ENCODE measurements at regions of chr3 and their contacts with region 1.

Region 1: DNA sequence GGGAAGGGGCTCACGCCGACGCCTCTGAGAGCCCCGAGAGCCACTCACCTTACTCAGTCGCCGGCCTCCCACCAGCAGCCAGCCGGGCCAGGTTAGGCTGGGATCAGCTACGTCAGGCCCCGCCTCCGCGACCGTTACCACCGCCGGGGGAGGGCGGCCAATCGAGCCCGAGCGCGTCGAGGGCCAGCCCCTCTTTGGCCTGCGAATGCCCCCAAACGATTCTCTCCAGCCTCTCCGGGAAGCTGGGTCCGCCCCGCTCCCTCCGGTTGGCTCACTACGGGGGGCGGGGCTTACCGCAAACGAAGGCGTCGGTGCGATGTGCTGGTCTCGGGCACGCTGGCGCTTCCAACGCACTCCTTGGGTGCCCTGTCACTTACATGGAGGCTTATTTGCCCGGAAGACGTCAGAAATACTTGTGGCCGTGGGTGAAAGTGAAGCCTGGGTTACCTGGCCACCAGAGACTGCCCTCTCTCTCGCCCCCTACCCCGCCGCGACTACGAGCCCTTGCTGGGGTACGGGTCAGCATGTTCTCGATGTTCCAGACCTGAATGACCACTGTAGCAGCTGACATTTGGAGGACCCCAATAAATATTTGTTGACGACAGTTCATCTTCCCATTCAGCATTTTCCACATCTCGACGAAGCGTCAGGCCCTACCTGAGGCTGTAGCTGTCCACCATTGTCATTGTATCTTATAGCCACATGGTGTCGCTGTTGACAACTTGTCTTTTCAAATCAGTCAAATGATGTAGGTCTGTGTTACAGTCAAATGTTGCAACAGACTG is at the start of gene CEP70:
- DNase-seq: peak; percentile 86 to 95 (median 92)
- ATAC-seq: peak; percentile 90 to 92
- H3K4me3 Mint-ChIP-seq: peak within 1 kb of the TSS; percentile 91 to 97 (median 94)
- H3K27ac Mint-ChIP-seq: peak within 1 kb of the TSS; percentile 91 to 100 (median 98)
- H3K4me1 Mint-ChIP-seq: peaks cover 0 to 16% (median 8%) of the 10 kb centered on the region in 4 donors
- H3K27me3 Mint-ChIP-seq: no peaks in the 10 kb centered on the region
- polyA plus RNA-seq, gene CEP70: 12.3 to 16.8 (median 12.5) TPM

Region 2: GRCh38 chr3:138060792-138061191 is 533.5 kb before region 1 on chr3:
- POLR2A ChIA-PET with region 1: no interaction called
- DNase-seq: no peak
- ATAC-seq: no peak
- H3K4me3 Mint-ChIP-seq: no peak overlapping the region
- H3K27ac Mint-ChIP-seq: no peak overlapping the region
- H3K4me1 Mint-ChIP-seq: no peaks in the 10 kb centered on the region
- H3K27me3 Mint-ChIP-seq: peaks cover 0 to 4% (median 1%) of the 10 kb centered on the region in 5 donors

Region 3: DNA sequence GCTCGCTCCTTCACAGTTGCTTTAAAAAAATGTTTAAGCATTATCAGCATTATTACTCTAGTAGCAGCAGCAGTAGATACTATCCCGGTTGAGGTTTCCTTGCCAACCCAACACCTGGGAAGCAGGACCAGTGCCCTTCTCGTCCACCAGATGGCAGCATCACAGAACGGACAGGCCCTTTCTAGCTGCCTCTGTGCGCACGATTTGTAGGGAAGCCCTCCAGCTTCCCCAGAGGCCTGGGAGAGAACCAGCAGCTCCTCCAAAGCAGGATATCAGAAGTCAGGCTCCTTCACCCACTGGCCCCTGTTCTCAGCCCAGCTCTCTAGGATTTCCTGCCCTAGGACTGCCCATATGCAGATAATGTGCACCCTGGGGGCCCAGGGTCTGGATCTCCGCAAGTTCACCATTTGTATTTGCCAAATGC is 176.8 kb before region 1 on chr3:
- POLR2A ChIA-PET with region 1: no interaction called
- DNase-seq: peak; percentile 31 to 76 (median 48)
- ATAC-seq: peak; percentile 63 to 75
- H3K4me3 Mint-ChIP-seq: no peak overlapping the region
- H3K27ac Mint-ChIP-seq: no peak overlapping the region
- H3K4me1 Mint-ChIP-seq: peaks cover 0 to 2% (median 0%) of the 10 kb centered on the region in 4 donors
- H3K27me3 Mint-ChIP-seq: peaks cover 2 to 15% (median 8%) of the 10 kb centered on the region in 5 donors

Region 4: GRCh38 chr3:138608322-138609135 is 14.2 kb after region 1 on chr3 and contains the start of gene FAIM:
- POLR2A ChIA-PET with region 1: interaction called, 53 read pairs
- DNase-seq: peak; percentile 58 to 86 (median 70)
- ATAC-seq: peak; percentile 83 to 84
- H3K4me3 Mint-ChIP-seq: peak within 1 kb of the TSS; percentile 79 to 99 (median 92)
- H3K27ac Mint-ChIP-seq: peak within 1 kb of the TSS; percentile 93 to 100 (median 97)
- H3K4me1 Mint-ChIP-seq: peaks cover 10 to 26% (median 22%) of the 10 kb centered on the region in 4 donors
- H3K27me3 Mint-ChIP-seq: peaks cover 0 to 6% (median 0%) of the 10 kb centered on the region in 5 donors
- polyA plus RNA-seq, gene FAIM: 8.7 to 9.7 (median 9.6) TPM

Region 5: DNA sequence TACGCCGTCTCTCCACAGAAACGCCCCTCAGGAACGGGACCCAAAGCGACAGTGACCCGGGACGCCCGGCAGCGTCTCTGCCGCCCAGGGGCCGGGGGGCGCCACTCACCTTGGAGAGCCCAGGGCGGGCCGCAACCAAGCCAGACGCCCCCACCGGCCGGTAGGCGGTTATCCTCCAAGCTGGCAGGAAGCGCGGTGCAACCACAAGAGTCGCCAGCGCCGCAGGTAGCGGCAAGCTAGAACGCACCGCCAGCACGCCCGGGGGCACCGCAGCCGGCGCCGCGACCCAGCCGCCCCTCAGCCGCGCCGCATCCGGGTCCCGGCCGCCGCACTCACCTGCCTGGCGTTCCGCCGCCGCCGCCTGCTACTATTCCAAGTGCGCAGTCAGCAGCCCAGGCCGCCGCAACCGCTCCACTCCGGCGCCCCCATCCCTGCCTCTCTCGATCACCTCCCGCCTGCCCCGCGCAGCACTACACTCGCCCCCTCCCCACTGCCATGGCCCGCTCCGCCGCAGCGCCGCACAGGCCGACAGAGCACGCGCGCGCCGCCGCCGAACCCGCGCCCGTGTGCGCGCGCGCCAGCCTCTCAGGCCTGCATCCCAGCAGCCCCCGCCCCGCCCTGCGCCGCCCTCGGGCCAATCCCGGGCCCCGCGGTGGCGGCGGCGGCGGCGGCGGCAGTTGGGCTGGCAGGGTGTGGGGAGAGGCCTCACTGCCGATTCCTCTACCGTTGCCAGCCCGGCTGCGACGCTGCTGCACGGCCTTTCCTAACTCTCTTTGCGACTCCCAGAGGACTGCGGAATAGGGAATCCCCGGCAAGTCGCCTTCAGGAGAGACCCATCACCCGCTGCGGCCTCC is 240.2 kb after region 1 on chr3 and contains the start of gene PIK3CB:
- POLR2A ChIA-PET with region 1: interaction called, 22 read pairs
- DNase-seq: peak; percentile 74 to 91 (median 84)
- ATAC-seq: peak; percentile 90
- H3K4me3 Mint-ChIP-seq: peak within 1 kb of the TSS; percentile 89 to 99 (median 94)
- H3K27ac Mint-ChIP-seq: peak within 1 kb of the TSS; percentile 91 to 99 (median 98)
- H3K4me1 Mint-ChIP-seq: peaks cover 13 to 35% (median 29%) of the 10 kb centered on the region in 4 donors
- H3K27me3 Mint-ChIP-seq: no peaks in the 10 kb centered on the region
- polyA plus RNA-seq, gene PIK3CB: 8.9 to 13.4 (median 10.1) TPM

Region 6: GRCh38 chr3:138915503-138916498 is 321.5 kb after region 1 on chr3:
- POLR2A ChIA-PET with region 1: interaction called, 33 read pairs
- DNase-seq: peak; percentile 53 to 91 (median 80)
- ATAC-seq: peak; percentile 88 to 91
- H3K4me3 Mint-ChIP-seq: peak overlapping the region; percentile 80 to 90 (median 87)
- H3K27ac Mint-ChIP-seq: peak overlapping the region; percentile 48 to 89 (median 78)
- H3K4me1 Mint-ChIP-seq: peaks cover 7 to 8% (median 7%) of the 10 kb centered on the region in 4 donors
- H3K27me3 Mint-ChIP-seq: peaks cover 0 to 6% (median 3%) of the 10 kb centered on the region in 5 donors